Activated T-helper 2 cell treated with anti-CD3 and anti-CD28 coated beads, Interferon-gamma antibody, Interleukin-2, Interleukin-4, amounts not matched to agents 10 μg/mL and 5 μg/mL and 100 μg/mL, durations not matched to agents 14 hours and 24 hours and 36 hours (primary cell): ENCODE measurements at regions of chr17 and their contacts with region 1.

Region 1: GRCh38 chr17:82273327-82274133 is at the start of gene CSNK1D:
- DNase-seq: peak; percentile 87
- H3K4me3 Mint-ChIP-seq: peak within 1 kb of the TSS; percentile 90
- H3K27ac Mint-ChIP-seq: peak within 1 kb of the TSS; percentile 100
- H3K4me1 Mint-ChIP-seq: peaks cover 29% of the 10 kb centered on the region
- H3K27me3 Mint-ChIP-seq: no peaks in the 10 kb centered on the region
- total RNA-seq, gene CSNK1D: 139 and 151 TPM in 2 replicates

Region 2: DNA sequence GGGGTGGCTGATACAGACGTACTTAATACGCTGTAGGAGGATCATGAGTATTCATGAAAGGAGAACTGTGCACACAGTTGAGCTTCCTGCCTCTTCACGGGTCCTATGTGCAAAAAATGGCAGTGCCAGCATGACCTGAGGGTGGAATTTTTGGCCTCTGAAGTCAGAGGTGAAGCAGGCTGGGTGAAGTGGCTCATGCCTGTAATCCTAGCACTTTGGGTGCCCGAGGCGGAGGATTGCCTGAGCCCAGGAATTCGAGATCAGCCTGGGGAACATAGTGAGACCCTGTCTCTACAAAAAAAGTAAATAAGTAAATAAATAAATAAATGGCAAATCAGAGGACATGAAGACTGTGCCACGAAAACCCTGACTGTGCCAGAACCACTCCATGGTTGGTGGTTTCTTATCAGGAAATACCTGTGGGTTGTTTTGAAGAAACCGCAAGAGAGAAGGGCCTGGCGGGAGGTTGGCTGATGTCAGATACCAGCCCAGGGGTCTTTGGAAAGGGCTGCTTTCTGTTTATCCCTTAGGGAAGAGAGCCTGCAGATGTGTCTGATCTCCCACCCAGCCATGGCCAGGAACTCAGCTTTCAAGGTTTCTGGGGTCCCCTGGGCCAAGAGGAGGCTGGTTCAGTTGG is 292.7 kb before region 1 on chr17:
- intact Hi-C with region 1: no loop called
- DNase-seq: no peak
- H3K4me3 Mint-ChIP-seq: no peak overlapping the region
- H3K27ac Mint-ChIP-seq: no peak overlapping the region
- H3K4me1 Mint-ChIP-seq: peaks cover 22% of the 10 kb centered on the region
- H3K27me3 Mint-ChIP-seq: no peaks in the 10 kb centered on the region

Region 3: DNA sequence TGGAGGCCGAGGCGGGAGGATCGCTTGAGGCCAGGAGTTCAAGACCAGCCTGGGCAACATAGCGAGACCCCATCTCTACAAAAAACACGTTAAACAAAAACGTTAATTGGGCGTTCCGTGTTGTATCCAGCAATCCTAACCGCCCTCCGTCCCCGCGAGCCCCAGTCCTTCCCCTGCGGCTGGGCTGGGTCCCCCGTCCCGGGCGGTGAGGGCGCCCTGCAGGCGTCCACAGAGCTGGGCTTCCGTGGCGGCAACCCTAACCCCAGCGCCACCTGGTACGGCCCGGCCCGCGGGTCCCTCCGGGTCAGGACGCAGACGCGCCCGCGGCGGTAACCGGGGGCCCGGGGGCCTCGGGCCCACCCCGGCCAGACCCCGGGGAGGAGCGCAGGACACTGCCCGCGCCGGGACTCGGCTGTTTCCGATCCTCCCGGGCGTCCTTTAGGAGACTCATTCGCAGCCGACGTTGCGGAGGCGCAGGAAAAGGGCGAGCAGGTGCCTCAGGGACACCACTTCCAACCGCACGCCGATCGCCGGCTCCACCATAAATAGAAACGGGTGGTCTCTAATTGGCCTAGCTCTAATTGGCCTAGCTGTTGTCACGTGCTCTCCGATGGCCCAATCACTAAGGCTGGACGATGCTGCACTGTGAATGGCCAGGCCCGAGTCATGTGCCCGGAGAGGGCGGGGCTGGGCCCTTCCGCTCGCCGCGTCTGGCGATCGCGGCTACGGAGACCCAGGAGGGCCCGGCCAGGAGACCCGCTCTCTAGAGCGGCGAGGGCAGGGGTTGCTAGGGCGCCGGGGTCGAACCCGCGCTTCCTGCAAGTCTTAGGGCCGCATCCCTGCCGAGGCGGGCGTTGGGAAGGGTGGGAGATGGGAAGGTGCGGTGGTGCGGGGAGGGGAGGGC is 19.0 kb after region 1 on chr17:
- intact Hi-C with region 1: loop called (anchors 1 kb)
- DNase-seq: peak; percentile 94
- H3K4me3 Mint-ChIP-seq: peak overlapping the region; percentile 83
- H3K27ac Mint-ChIP-seq: peak overlapping the region; percentile 86
- H3K4me1 Mint-ChIP-seq: peaks cover 40% of the 10 kb centered on the region
- H3K27me3 Mint-ChIP-seq: no peaks in the 10 kb centered on the region